Dorsolateral prefrontal cortex (tissue), 120 donors: ENCODE measurements at regions of chr7 and their contacts with region 1.

Region 1: DNA sequence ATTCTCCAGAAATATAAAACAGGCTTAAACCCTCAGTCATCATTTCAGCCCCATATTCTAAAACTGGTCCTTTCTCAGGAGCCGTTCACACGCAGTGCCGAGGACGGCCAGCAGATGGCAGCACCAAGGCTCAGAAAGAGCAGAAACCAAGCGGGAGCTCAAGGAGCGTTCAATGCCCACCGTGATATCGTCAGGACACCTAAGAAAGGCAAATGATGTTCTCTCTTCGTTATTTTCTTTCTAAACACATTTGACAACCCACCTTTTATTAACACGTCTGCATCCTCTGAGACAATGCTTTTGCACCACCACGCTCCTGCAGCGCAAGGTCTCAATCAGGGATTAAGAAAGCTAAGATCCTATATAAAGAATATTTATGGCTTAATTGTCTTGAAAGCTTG is 45.7 kb upstream of the RBM33 start:
- DNase-seq: peak; percentile 78 to 93 (median 88)
- H3K4me3 ChIP-seq: peak overlapping the region in 22 of 59 donors; percentile 0 to 49 (median 28)
- H3K27ac ChIP-seq: no peak overlapping the region
- H3K27me3 ChIP-seq: peaks cover 0 to under 1% (median 0%) of the 10 kb centered on the region in 45 donors
- CTCF ChIP-seq: peak; percentile 94 to 100 (median 99)

Region 2: GRCh38 chr7:155456738-155457564 is 141.9 kb before region 1 on chr7:
- intact Hi-C with region 1: no loop called
- DNase-seq: peak; percentile 67 to 95 (median 78)
- H3K4me3 ChIP-seq: peak overlapping the region; percentile 23 to 76 (median 59)
- H3K27ac ChIP-seq: peak overlapping the region in 10 of 59 donors; percentile 10 to 97 (median 54)
- H3K27me3 ChIP-seq: peaks cover 21 to 96% (median 95%) of the 10 kb centered on the region in 45 donors
- CTCF ChIP-seq: no peak

Region 3: GRCh38 chr7:155738652-155739537 is 140.1 kb after region 1 on chr7:
- intact Hi-C with region 1: loop called (anchors 2 to 5 kb)
- DNase-seq: peak; percentile 77 to 94 (median 83)
- H3K4me3 ChIP-seq: no peak overlapping the region
- H3K27ac ChIP-seq: no peak overlapping the region
- H3K27me3 ChIP-seq: no peaks in the 10 kb centered on the region
- CTCF ChIP-seq: peak; percentile 33 to 97 (median 81)

Region 4: DNA sequence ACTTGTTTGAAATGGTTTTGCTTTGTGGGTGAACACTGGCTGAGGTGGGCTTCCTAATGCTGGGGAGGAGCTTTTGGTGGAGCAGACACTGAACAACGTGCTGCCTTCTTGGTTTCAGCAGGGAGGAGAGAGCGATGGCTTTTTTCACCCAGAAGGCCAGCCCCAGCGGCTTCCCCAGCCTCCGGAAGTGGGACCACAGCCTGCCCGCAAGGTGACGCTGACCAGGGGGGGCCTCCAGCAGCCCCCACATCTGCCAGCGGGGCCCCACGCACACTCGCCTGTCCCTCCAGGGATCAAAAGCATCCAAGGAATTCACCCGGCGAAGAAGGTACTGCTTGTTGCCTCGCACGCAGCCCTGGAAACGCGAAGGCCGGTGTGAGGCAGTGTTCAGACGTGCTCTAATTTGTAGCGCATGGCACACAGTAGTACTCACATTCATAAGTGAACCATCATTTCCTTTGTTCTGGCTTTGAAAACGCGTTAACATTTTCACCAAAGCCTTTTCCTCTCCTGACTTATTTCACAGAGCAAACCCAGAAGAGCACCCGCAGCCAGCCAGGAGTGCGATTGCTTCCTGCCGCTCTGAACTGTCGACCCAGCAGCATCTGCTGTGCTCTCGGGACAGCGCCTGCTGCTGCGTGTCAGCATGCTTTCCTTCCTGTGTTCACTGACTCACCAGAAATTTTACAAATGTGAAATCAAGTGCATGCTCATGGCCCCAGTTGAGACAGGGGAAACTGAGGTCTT is 165.1 kb after region 1 on chr7:
- intact Hi-C with region 1: loop called in 1 of 2 experiments (anchors 1 kb)
- DNase-seq: no peak
- H3K4me3 ChIP-seq: no peak overlapping the region
- H3K27ac ChIP-seq: peak overlapping the region in 21 of 59 donors; percentile 5 to 70 (median 25)
- H3K27me3 ChIP-seq: no peaks in the 10 kb centered on the region
- CTCF ChIP-seq: no peak